HCT116 (cell line): ENCODE measurements at regions of chr17 and their contacts with region 1.

Region 1: DNA sequence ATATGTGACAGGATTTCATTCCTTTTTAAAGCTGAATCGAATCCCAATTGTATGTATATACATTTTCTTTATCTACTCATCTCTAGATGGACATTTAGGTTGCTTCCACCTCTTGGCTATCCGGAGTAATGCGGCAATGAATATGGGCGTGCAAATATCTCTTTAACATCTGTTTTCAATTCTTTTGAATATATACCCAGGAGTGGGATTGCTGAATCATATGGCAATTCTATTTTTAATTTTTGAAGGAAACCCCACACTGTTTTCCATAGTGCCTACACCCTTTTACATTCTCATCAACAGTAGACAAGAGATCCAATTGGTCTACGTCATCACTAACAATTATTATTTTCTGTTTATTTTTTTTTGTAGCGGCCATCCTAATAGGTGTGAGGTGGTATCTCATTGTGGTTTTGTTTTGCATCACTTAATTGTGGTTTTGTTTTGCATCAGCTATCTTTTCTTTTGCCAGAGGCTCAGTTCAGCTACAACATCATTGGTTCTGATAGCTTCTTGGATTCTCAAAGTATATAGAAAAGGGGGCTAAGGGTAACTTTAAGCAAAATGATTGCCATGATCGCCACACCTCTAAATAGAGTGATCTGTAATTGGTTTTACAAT is 25.6 kb upstream of the MAP2K6 start:
- DNase-seq: no peak
- ATAC-seq: no peak
- H3K4me3 ChIP-seq: no peak overlapping the region
- H3K27ac ChIP-seq: no peak overlapping the region
- H3K4me1 ChIP-seq: no peaks in the 10 kb centered on the region
- H3K27me3 ChIP-seq: no peaks in the 10 kb centered on the region
- CTCF ChIP-seq: no peak
- POLR2A ChIP-seq: no peak
- RAD21 ChIP-seq: no peak

Region 2: DNA sequence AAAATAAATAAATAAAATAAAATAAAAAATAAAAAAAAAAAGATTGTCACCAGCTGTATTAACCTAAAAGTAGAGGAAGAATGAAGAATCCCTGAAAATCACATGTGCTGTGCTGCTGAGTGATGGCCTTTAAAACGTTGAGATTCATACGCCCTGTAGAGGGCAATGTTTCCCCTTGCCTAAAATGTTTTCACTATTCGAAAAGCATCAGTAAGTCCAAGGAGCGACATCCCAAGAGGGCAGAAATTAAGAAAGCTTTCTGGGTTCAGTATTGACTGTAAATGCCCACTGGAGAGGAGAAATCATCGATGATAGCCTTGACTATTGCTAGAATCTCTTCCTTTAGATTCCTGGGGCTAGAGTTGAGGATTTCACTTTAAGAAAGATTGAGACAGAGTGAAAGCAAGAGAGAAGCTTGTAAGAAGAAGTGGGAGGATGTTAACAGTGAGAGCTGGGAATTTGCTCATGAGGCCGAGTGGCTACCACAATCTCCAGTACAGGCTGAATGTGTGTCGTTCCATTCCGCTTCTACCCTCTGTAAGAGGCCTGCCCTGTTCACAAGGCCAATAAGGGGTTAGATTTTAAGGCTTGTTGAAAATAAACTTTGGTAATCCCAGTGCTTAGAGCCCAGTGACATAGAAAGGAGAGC is 616.9 kb before region 1 on chr17:
- CTCF ChIA-PET with region 1: interaction called, 4 read pairs
- POLR2A ChIA-PET with region 1: no interaction called
- RAD21 ChIA-PET with region 1: no interaction called
- intact Hi-C with region 1: loop called (anchors 10 kb)
- DNase-seq: peak; percentile 62
- ATAC-seq: peak; percentile 67
- H3K4me3 ChIP-seq: peak overlapping the region; percentile 4 to 10; a peak in 1 of 4 replicates
- H3K27ac ChIP-seq: no peak overlapping the region
- H3K4me1 ChIP-seq: peaks cover 4 to 9% of the 10 kb centered on the region in 2 experiments; a peak in 3 of 4 replicates
- H3K27me3 ChIP-seq: no peaks in the 10 kb centered on the region
- CTCF ChIP-seq: peak; percentile 65 to 84 (median 78)
- POLR2A ChIP-seq: no peak
- RAD21 ChIP-seq: peak; percentile 77

Region 3: GRCh38 chr17:69269131-69269998 is 119.6 kb before region 1 on chr17:
- CTCF ChIA-PET with region 1: no interaction called
- POLR2A ChIA-PET with region 1: no interaction called
- RAD21 ChIA-PET with region 1: no interaction called
- intact Hi-C with region 1: loop called (anchors 10 kb)
- DNase-seq: no peak
- ATAC-seq: no peak
- H3K4me3 ChIP-seq: no peak overlapping the region
- H3K27ac ChIP-seq: no peak overlapping the region
- H3K4me1 ChIP-seq: no peaks in the 10 kb centered on the region; a peak in 1 of 4 replicates
- H3K27me3 ChIP-seq: no peaks in the 10 kb centered on the region
- CTCF ChIP-seq: no peak
- POLR2A ChIP-seq: no peak
- RAD21 ChIP-seq: no peak

Region 4: GRCh38 chr17:69335058-69335457 is 53.9 kb before region 1 on chr17:
- CTCF ChIA-PET with region 1: interaction called, 4 read pairs
- POLR2A ChIA-PET with region 1: interaction called, 3 read pairs
- RAD21 ChIA-PET with region 1: no interaction called
- intact Hi-C with region 1: loop called (anchors 1 kb)
- DNase-seq: peak; percentile 69
- ATAC-seq: peak; percentile 78
- H3K4me3 ChIP-seq: no peak overlapping the region
- H3K27ac ChIP-seq: no peak overlapping the region
- H3K4me1 ChIP-seq: no peaks in the 10 kb centered on the region
- H3K27me3 ChIP-seq: no peaks in the 10 kb centered on the region
- CTCF ChIP-seq: peak; percentile 46 to 68 (median 53)
- POLR2A ChIP-seq: no peak
- RAD21 ChIP-seq: peak; percentile 68

Region 5: GRCh38 chr17:69404382-69404781 is 15.4 kb after region 1 on chr17:
- CTCF ChIA-PET with region 1: interaction called, 23 read pairs
- POLR2A ChIA-PET with region 1: no interaction called
- RAD21 ChIA-PET with region 1: no interaction called
- intact Hi-C with region 1: no loop called
- DNase-seq: no peak
- ATAC-seq: no peak
- H3K4me3 ChIP-seq: no peak overlapping the region
- H3K27ac ChIP-seq: no peak overlapping the region
- H3K4me1 ChIP-seq: no peaks in the 10 kb centered on the region
- H3K27me3 ChIP-seq: no peaks in the 10 kb centered on the region
- CTCF ChIP-seq: no peak
- POLR2A ChIP-seq: no peak
- RAD21 ChIP-seq: no peak

Region 6: GRCh38 chr17:69414408-69415274 is 25.7 kb after region 1 on chr17 and contains the start of gene MAP2K6:
- CTCF ChIA-PET with region 1: no interaction called
- POLR2A ChIA-PET with region 1: no interaction called
- RAD21 ChIA-PET with region 1: no interaction called
- intact Hi-C with region 1: no loop called
- DNase-seq: no peak
- ATAC-seq: peak; percentile 85
- H3K4me3 ChIP-seq: no peak within 1 kb of the TSS
- H3K27ac ChIP-seq: no peak within 1 kb of the TSS
- H3K4me1 ChIP-seq: no peaks in the 10 kb centered on the region
- H3K27me3 ChIP-seq: no peaks in the 10 kb centered on the region
- CTCF ChIP-seq: no peak
- POLR2A ChIP-seq: no peak
- RAD21 ChIP-seq: no peak
- total RNA-seq, gene MAP2K6: 0.22 TPM